GM12878 (cell line): ENCODE measurements at regions of chr17 and their contacts with region 1.

Region 1: GRCh38 chr17:59010026-59010425 is 96.7 kb downstream of the TRIM37 start:
- DNase-seq: no peak
- ATAC-seq: no peak
- H3K4me3 ChIP-seq: no peak overlapping the region
- H3K27ac ChIP-seq: no peak overlapping the region
- H3K4me1 ChIP-seq: no peaks in the 10 kb centered on the region
- H3K27me3 ChIP-seq: no peaks in the 10 kb centered on the region
- CTCF ChIP-seq: no peak
- EP300 ChIP-seq: no peak
- POLR2A ChIP-seq: no peak
- RAD21 ChIP-seq: no peak

Region 2: DNA sequence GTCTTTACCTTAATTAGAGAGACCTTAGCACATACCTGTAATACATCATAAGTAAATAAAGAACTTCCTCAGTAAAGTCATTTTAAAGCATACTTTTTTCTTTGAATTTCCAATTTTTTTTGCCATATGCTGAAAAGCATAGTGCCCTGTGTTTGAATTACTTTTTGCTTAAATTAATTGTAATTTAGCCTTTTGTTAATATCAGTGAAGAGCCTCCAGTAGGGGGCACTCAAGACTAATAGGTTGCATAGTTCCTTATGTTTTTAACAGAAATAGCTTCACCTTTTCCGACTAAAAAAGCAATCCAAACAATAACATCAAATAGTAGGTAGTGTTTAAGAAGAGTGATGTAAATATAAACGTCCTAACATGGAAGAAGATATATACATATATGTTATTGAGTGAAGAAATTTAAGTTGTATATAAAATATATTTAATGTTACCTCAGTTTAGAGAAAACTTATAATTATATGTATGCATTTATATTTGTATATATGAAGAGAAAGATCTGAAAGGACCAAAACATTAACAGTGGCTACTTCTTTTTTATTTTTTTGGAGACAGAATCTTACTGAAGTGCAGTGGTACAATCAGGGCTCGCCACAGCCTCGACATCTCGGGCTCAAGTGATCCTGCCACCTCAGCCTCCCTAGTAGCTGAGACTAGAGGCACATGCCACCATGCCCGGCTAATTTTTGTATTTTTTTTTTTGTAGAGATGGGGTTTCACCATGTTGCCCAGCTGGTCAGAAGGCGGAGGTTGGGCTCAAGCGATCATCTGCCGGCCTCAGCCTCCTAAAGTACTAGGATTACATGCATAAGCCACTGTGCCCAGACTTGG is 298.9 kb before region 1 on chr17:
- CTCF ChIA-PET with region 1: interaction called, 110 read pairs
- POLR2A ChIA-PET with region 1: interaction called, 3 read pairs
- RAD21 ChIA-PET with region 1: interaction called, 71 read pairs
- SMC1A ChIA-PET with region 1: interaction called, 62 read pairs
- in situ Hi-C with region 1: loop called (anchors 5 kb)
- intact Hi-C with region 1: loop called (anchors 1 kb)
- DNase-seq: no peak
- ATAC-seq: peak; percentile 45; the same call in 2 of the 3 replicates
- H3K4me3 ChIP-seq: no peak overlapping the region
- H3K27ac ChIP-seq: no peak overlapping the region
- H3K4me1 ChIP-seq: peaks cover 16% of the 10 kb centered on the region
- H3K27me3 ChIP-seq: no peaks in the 10 kb centered on the region
- CTCF ChIP-seq: peak; percentile 57 to 71 (median 59)
- EP300 ChIP-seq: no peak
- POLR2A ChIP-seq: no peak
- RAD21 ChIP-seq: peak; percentile 92